ENCODE measurements at regions of chr1 and their contacts with region 1.

Region 1: GRCh38 chr1:67760030-67760821 is 73.0 kb downstream of the GNG12 start:
- DNase-seq: peak; percentile 85
- ATAC-seq: peak; percentile 82
- H3K4me3 ChIP-seq: peak overlapping the region; percentile 9; the same call in 1 of the 2 replicates
- H3K27ac ChIP-seq: peak overlapping the region; percentile 45
- H3K4me1 ChIP-seq: peaks cover 32% of the 10 kb centered on the region
- H3K27me3 ChIP-seq: no peaks in the 10 kb centered on the region
- CTCF ChIP-seq: peak; percentile 88

Region 2: GRCh38 chr1:67555461-67556296 is 204.5 kb before region 1 on chr1:
- CTCF ChIA-PET with region 1: interaction called, 4 read pairs
- POLR2A ChIA-PET with region 1: no interaction called
- intact Hi-C with region 1: loop called (anchors 1 kb)
- DNase-seq: no peak
- ATAC-seq: no peak; the same call in 1 of the 2 replicates
- H3K4me3 ChIP-seq: no peak overlapping the region
- H3K27ac ChIP-seq: peak overlapping the region; percentile 86
- H3K4me1 ChIP-seq: peaks cover 42% of the 10 kb centered on the region
- H3K27me3 ChIP-seq: no peaks in the 10 kb centered on the region
- CTCF ChIP-seq: no peak

Region 3: DNA sequence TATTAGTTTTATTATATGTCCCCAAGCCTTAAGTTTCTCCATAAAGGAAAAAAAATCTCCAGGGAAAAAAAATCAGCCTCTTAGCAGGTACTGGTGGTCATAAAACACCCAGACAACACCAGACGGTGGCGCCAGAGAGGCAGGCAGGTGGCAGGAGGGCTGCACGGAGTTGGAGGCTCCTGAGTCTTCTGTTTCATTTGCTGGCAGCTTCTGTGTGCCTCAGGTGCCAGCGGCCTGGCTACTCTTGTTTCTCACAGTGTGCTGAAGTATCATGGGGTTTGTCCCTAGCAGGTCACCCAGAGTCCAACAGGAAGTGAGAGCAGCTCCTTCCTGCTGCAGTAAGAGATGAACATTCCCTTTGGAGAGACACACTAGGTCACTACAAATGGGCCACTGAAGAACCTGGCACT is 198.5 kb before region 1 on chr1:
- CTCF ChIA-PET with region 1: interaction called, 9 read pairs
- POLR2A ChIA-PET with region 1: interaction called, 5 read pairs
- intact Hi-C with region 1: loop called (anchors 1 kb)
- DNase-seq: peak; percentile 92
- ATAC-seq: peak; percentile 90
- H3K4me3 ChIP-seq: no peak overlapping the region
- H3K27ac ChIP-seq: 0 out of 2 replicates have a peak overlapping the region, but pooled peaks have one; percentile 7
- H3K4me1 ChIP-seq: peaks cover 18% of the 10 kb centered on the region
- H3K27me3 ChIP-seq: no peaks in the 10 kb centered on the region
- CTCF ChIP-seq: peak; percentile 93

Region 4: GRCh38 chr1:67741121-67741520 is 19.1 kb before region 1 on chr1:
- CTCF ChIA-PET with region 1: no interaction called
- POLR2A ChIA-PET with region 1: no interaction called
- intact Hi-C with region 1: no loop called
- DNase-seq: no peak
- ATAC-seq: no peak
- H3K4me3 ChIP-seq: no peak overlapping the region
- H3K27ac ChIP-seq: no peak overlapping the region
- H3K4me1 ChIP-seq: peaks cover 8% of the 10 kb centered on the region
- H3K27me3 ChIP-seq: no peaks in the 10 kb centered on the region
- CTCF ChIP-seq: no peak

Region 5: GRCh38 chr1:67780637-67781036 is 20.4 kb after region 1 on chr1:
- CTCF ChIA-PET with region 1: no interaction called
- POLR2A ChIA-PET with region 1: no interaction called
- intact Hi-C with region 1: no loop called
- DNase-seq: no peak
- ATAC-seq: no peak
- H3K4me3 ChIP-seq: no peak overlapping the region
- H3K27ac ChIP-seq: no peak overlapping the region
- H3K4me1 ChIP-seq: no peaks in the 10 kb centered on the region
- H3K27me3 ChIP-seq: no peaks in the 10 kb centered on the region
- CTCF ChIP-seq: no peak